Activated T-helper 1 cell treated with anti-CD3 and anti-CD28 coated beads, Interleukin-12 subunit alpha, Interleukin-12 subunit beta, Interleukin-2, Interleukin-4 antibody, amounts not matched to agents 30 ng/mL and 10 ng/mL and 1 ng/mL, durations not matched to agents 14 hours and 24 hours and 36 hours (primary cell): ENCODE measurements at regions of chr15 and their contacts with region 1.

Region 1: GRCh38 chr15:41989259-41989933 is 17.0 kb upstream of the EHD4 start:
- DNase-seq: peak; percentile 72
- H3K4me3 Mint-ChIP-seq: no peak overlapping the region
- H3K27ac Mint-ChIP-seq: no peak overlapping the region
- H3K4me1 Mint-ChIP-seq: peaks cover 5% of the 10 kb centered on the region
- H3K27me3 Mint-ChIP-seq: no peaks in the 10 kb centered on the region

Region 2: GRCh38 chr15:41848631-41849030 is 140.8 kb before region 1 on chr15:
- intact Hi-C with region 1: no loop called
- DNase-seq: no peak
- H3K4me3 Mint-ChIP-seq: no peak overlapping the region
- H3K27ac Mint-ChIP-seq: no peak overlapping the region
- H3K4me1 Mint-ChIP-seq: peaks cover 7% of the 10 kb centered on the region
- H3K27me3 Mint-ChIP-seq: peaks cover 3% of the 10 kb centered on the region

Region 3: DNA sequence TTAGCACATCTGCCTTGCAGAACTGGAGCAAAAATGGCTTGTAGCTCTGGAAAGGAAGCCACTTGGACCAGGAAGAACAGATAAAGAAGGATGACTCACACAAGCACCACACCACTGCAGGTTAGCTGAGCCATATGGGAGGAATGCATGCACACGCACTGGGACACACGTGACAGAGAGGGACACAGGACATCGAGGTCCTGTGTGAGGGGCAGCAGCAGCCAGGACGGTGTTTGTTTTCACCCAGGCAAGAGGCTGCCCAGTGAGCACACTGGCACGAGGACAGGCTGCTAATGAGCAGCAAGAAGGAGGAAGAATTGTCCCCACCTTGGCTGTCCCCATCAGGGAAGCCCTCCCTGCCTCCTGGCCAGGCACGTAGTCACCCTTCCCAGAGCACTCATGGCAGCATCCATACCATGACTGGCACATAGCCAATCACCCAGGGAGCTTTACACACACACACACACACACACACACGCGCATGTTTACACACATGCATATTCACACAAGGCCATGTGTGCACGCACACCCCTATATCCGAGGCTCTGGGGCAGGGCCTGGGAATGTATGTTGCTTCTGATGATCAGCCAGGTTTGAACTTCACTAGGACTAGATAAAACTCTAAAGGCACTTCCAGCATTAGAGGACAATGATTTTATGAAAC is 71.5 kb before region 1 on chr15:
- intact Hi-C with region 1: no loop called
- DNase-seq: no peak
- H3K4me3 Mint-ChIP-seq: no peak overlapping the region
- H3K27ac Mint-ChIP-seq: no peak overlapping the region
- H3K4me1 Mint-ChIP-seq: peaks cover 34% of the 10 kb centered on the region
- H3K27me3 Mint-ChIP-seq: no peaks in the 10 kb centered on the region

Region 4: GRCh38 chr15:41936649-41937567 is 52.5 kb before region 1 on chr15:
- intact Hi-C with region 1: no loop called
- DNase-seq: peak; percentile 78
- H3K4me3 Mint-ChIP-seq: peak overlapping the region; percentile 73
- H3K27ac Mint-ChIP-seq: peak overlapping the region; percentile 100
- H3K4me1 Mint-ChIP-seq: peaks cover 78% of the 10 kb centered on the region
- H3K27me3 Mint-ChIP-seq: no peaks in the 10 kb centered on the region

Region 5: GRCh38 chr15:42010434-42010833 is 21.0 kb after region 1 on chr15:
- intact Hi-C with region 1: no loop called
- DNase-seq: no peak
- H3K4me3 Mint-ChIP-seq: no peak overlapping the region
- H3K27ac Mint-ChIP-seq: peak overlapping the region; percentile 36
- H3K4me1 Mint-ChIP-seq: peaks cover 32% of the 10 kb centered on the region
- H3K27me3 Mint-ChIP-seq: peaks cover 2% of the 10 kb centered on the region

Region 6: DNA sequence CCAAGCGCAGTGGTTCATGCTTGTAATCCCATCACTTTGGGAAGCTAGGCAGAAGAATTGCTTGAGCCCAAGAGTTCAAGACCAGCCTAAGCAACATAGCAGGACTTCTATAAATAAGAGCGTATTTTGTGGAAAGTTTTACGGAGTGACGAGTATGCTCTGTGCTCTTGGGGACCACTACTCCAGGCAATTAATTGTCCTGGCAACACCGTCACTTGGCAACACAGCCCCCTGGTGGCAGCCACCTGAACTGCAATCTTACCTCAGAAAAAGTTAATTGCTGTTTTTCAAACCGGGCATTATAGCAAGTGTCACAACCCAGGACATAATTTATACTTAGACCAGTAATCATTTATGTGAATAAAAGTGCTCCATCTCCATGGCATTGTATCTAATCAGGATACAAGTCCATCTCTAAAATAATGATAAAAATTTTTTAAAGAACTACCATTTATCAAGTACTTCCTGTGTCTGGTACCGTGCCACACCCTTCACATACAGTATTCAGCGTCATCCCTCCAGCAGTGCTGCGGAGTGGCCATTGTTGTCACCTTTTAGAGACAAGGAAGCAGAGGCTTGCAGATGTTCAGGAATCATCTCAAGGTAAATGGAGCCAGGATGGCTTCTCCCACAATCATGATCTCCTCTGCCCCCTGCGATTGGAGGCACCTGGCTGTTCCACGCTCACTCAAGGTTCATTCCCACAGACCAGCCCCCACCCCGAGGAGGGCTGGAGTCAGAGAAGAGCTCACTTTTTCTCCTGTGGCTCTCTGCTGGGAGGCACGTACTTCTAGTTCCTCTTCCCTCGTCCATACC is 70.5 kb after region 1 on chr15:
- intact Hi-C with region 1: loop called (anchors 1 kb)
- DNase-seq: peak; percentile 52
- H3K4me3 Mint-ChIP-seq: no peak overlapping the region
- H3K27ac Mint-ChIP-seq: no peak overlapping the region
- H3K4me1 Mint-ChIP-seq: peaks cover 10% of the 10 kb centered on the region
- H3K27me3 Mint-ChIP-seq: peaks cover 25% of the 10 kb centered on the region

Region 7: GRCh38 chr15:42084460-42085235 is 95.3 kb after region 1 on chr15:
- intact Hi-C with region 1: loop called (anchors 1 kb)
- DNase-seq: no peak
- H3K4me3 Mint-ChIP-seq: no peak overlapping the region
- H3K27ac Mint-ChIP-seq: no peak overlapping the region
- H3K4me1 Mint-ChIP-seq: peaks cover 6% of the 10 kb centered on the region
- H3K27me3 Mint-ChIP-seq: peaks cover 6% of the 10 kb centered on the region